Activated CD8-positive, alpha-beta T cell treated with anti-CD3 and anti-CD28 coated beads for 36 hours (primary cell): ENCODE measurements at regions of chr15 and their contacts with region 1.

Region 1: DNA sequence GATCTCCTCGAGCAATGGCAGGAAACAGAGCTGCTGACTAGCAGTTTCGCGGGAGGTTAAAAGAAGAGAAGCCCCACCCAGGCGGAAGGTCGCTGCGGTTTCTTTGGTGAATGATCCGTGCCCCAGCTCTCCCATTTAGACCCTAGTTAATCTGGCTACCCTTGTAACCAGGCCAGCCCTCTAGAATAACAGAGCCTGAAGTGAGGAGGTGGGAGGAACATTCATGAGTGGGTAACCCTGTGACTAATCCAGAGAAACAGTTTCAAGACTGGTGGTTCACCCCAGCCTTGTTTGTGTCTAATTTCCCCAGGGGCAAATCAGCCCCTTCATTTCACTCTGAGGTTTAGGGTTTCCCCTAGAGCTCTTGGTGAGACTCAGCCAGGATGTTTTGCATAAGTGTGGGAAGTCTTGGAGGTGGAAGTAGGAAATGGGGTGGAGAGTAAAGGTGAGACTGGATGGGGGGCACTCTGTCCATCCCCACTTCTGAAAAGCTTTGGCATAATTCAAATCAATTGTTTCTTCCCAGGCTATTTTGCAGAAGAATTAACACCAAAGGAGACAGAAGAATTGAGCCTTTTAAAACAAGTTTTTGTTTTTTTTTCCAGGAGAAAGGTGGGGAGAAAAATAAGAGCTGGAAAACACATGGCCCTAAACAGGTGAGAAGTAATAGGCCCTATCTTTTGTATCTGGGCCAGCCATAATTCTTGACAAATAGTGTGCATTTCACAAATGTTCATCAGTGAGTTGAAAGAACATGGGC is 303.1 kb downstream of the RPLP1 start:
- DNase-seq: peak; percentile 95
- ATAC-seq: peak; percentile 73
- H3K4me3 Mint-ChIP-seq: peak overlapping the region; percentile 19
- H3K27ac Mint-ChIP-seq: peak overlapping the region; percentile 88
- H3K4me1 Mint-ChIP-seq: peaks cover 79% of the 10 kb centered on the region
- H3K27me3 Mint-ChIP-seq: peaks cover 6% of the 10 kb centered on the region
- CTCF ChIP-seq: no peak

Region 2: DNA sequence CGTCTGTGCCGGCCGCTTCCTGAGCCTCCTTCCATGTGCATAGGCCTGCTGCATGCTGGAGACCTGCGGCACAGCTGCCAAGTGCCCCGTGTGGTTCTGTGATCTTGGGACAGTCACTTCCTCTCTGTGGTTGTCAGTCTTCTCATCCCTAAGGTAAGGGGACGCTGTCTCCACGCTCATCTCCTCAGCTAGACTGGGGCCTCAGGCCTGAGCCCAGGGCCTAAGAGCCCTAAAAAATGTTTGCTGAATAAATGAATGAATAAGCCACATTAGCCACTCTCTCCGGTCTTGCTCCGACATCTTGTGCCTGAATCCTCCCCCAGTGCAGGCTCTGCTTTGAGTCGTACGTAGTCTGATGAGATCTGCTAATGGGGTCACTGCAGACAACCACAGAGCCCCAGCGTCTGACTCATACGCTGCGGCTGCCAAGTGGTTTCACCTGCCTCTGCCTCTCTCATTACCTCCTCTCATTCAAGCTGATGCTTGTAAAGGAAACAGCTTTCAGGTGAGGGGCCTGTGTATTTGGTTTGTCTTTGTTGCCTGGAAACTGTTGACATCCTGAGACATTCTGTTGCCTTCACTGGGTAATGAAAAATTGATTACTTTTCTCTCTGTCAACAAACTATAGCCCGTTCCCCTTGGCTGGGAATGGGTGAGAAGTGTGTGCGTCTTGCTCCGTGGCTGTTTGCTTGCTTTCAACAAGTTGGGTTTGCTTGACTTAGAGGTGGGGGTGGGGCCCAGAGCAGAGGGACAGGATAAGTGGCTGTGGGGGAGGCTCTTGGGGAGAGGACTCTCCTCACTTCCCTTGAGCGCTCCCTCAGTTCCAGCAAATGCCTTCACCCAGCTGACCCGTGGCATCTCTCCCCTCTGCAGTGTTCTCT is 287.2 kb before region 1 on chr15:
- CTCF ChIA-PET with region 1: no interaction called
- POLR2A ChIA-PET with region 1: interaction called, 3 read pairs
- intact Hi-C with region 1: loop called (anchors 5 kb)
- DNase-seq: peak; percentile 95
- ATAC-seq: peak; percentile 95
- H3K4me3 Mint-ChIP-seq: peak overlapping the region; percentile 50
- H3K27ac Mint-ChIP-seq: peak overlapping the region; percentile 91
- H3K4me1 Mint-ChIP-seq: peaks cover 34% of the 10 kb centered on the region
- H3K27me3 Mint-ChIP-seq: peaks cover 3% of the 10 kb centered on the region
- CTCF ChIP-seq: no peak

Region 3: DNA sequence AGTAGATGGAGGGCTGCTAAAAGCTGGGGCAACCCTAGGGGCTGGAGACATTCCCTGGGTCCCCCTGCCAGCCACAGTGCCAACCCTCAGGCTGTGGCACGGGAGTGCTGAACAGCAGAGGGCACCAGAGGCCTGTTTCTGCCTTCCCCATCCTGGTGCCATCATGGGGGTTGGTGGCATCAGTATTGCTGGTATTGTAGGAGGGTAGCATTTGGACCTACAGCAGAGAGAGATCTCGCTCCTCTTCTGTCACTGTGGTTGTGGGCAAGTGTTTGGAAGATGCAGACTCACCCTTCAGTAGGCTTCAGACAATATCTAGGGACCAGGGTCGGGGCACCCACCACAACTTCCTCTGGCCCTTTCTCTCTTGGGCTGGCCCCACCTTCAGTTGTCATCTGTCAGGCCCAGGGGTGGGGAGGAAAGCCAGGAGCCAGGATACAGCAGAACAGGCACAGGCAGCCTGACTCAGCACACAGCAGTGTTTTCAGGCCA is 179.7 kb before region 1 on chr15:
- CTCF ChIA-PET with region 1: no interaction called
- POLR2A ChIA-PET with region 1: no interaction called
- intact Hi-C with region 1: loop called (anchors 10 kb)
- DNase-seq: peak; percentile 78
- ATAC-seq: peak; percentile 43
- H3K4me3 Mint-ChIP-seq: no peak overlapping the region
- H3K27ac Mint-ChIP-seq: no peak overlapping the region
- H3K4me1 Mint-ChIP-seq: peaks cover 32% of the 10 kb centered on the region
- H3K27me3 Mint-ChIP-seq: no peaks in the 10 kb centered on the region
- CTCF ChIP-seq: peak; percentile 69

Region 4: GRCh38 chr15:69643476-69643875 is 112.3 kb before region 1 on chr15:
- CTCF ChIA-PET with region 1: no interaction called
- POLR2A ChIA-PET with region 1: no interaction called
- intact Hi-C with region 1: no loop called
- DNase-seq: no peak
- ATAC-seq: no peak
- H3K4me3 Mint-ChIP-seq: no peak overlapping the region
- H3K27ac Mint-ChIP-seq: no peak overlapping the region
- H3K4me1 Mint-ChIP-seq: no peaks in the 10 kb centered on the region
- H3K27me3 Mint-ChIP-seq: no peaks in the 10 kb centered on the region
- CTCF ChIP-seq: no peak

Region 5: DNA sequence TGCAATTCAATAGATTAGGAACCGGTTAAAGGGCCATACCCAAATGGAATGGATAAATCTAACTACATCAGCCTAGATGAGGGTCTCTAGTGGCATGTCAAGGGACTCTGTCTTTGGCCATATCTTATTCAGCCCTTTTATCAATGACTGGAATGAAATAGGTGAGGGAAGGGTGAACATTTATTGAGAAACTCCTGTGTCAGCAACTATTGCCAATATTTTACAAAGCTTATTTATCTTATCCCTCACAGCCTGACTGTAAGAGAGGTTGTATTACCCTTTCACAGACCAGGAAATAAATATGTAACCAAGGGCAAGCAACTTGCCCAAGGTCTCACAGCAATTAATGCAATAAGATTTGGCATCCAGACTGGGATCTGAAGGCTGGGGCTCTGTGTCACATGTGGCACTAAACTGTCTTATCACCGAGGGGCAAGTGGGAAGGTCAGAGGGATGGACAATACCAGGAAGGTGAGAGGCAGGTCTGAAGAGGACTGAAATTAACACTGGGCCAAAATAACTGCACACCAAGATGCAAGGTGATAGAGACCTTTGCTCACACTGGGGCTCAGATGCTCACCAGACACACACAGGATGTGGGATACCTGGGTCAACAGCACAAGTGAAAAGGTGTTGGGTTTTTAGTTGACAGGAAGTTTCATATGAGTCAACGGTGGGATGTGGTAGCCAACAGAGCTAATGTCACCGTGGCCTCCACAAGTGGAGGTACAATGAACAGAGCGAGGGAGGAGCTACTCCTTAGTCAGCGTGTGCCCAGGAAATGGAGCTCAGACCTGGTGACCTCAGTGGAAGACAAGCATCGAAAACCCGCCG is 41.8 kb before region 1 on chr15:
- CTCF ChIA-PET with region 1: interaction called, 4 read pairs
- POLR2A ChIA-PET with region 1: interaction called, 13 read pairs
- intact Hi-C with region 1: loop called (anchors 2 kb)
- DNase-seq: peak; percentile 91
- ATAC-seq: peak; percentile 93
- H3K4me3 Mint-ChIP-seq: no peak overlapping the region
- H3K27ac Mint-ChIP-seq: peak overlapping the region; percentile 83
- H3K4me1 Mint-ChIP-seq: peaks cover 61% of the 10 kb centered on the region
- H3K27me3 Mint-ChIP-seq: no peaks in the 10 kb centered on the region
- CTCF ChIP-seq: no peak

Region 6: DNA sequence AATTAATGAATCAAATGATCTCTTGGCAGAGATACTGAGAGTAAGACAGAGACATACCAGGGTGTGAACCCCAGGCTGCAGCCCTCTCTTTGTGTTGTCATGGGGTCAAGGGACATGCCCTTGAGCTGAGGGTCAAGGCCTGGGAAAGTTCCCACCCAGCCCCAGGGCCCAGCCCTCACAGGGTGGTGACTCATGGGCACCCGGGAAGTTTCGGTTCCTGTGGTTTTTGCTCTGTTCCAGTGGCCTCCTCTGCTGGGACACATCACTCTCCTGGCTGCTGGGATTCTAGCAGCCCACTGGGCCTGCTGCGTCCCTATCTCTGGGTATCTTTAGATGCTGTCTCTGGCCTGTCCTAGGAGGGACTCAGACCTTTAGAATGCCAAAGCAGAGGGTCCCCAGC is 490.2 kb after region 1 on chr15:
- CTCF ChIA-PET with region 1: no interaction called
- POLR2A ChIA-PET with region 1: no interaction called
- intact Hi-C with region 1: loop called (anchors 10 kb)
- DNase-seq: no peak
- ATAC-seq: no peak
- H3K4me3 Mint-ChIP-seq: no peak overlapping the region
- H3K27ac Mint-ChIP-seq: no peak overlapping the region
- H3K4me1 Mint-ChIP-seq: peaks cover 66% of the 10 kb centered on the region
- H3K27me3 Mint-ChIP-seq: no peaks in the 10 kb centered on the region
- CTCF ChIP-seq: no peak